HCT116 (cell line): ENCODE measurements at regions of chr4 and their contacts with region 1.

Region 1: GRCh38 chr4:74133786-74134499 is 24.0 kb upstream of the MTHFD2L start:
- DNase-seq: peak; percentile 86
- ATAC-seq: peak; percentile 99
- H3K4me3 ChIP-seq: no peak overlapping the region
- H3K27ac ChIP-seq: no peak overlapping the region
- H3K4me1 ChIP-seq: peaks cover 0 to 6% of the 10 kb centered on the region in 2 experiments; a peak in 2 of 4 replicates
- H3K27me3 ChIP-seq: no peaks in the 10 kb centered on the region
- CTCF ChIP-seq: peak; percentile 84 to 89 (median 85)
- POLR2A ChIP-seq: no peak
- RAD21 ChIP-seq: peak; percentile 97

Region 2: GRCh38 chr4:73341454-73341853 is 792.5 kb before region 1 on chr4:
- CTCF ChIA-PET with region 1: interaction called, 13 read pairs
- POLR2A ChIA-PET with region 1: no interaction called
- RAD21 ChIA-PET with region 1: interaction called in 1 of 2 experiments, 3 read pairs
- intact Hi-C with region 1: no loop called
- DNase-seq: peak; percentile 33
- ATAC-seq: peak; percentile 85
- H3K4me3 ChIP-seq: no peak overlapping the region
- H3K27ac ChIP-seq: no peak overlapping the region
- H3K4me1 ChIP-seq: no peaks in the 10 kb centered on the region
- H3K27me3 ChIP-seq: no peaks in the 10 kb centered on the region
- CTCF ChIP-seq: peak; percentile 52 to 82 (median 65)
- POLR2A ChIP-seq: no peak
- RAD21 ChIP-seq: peak; percentile 84

Region 3: DNA sequence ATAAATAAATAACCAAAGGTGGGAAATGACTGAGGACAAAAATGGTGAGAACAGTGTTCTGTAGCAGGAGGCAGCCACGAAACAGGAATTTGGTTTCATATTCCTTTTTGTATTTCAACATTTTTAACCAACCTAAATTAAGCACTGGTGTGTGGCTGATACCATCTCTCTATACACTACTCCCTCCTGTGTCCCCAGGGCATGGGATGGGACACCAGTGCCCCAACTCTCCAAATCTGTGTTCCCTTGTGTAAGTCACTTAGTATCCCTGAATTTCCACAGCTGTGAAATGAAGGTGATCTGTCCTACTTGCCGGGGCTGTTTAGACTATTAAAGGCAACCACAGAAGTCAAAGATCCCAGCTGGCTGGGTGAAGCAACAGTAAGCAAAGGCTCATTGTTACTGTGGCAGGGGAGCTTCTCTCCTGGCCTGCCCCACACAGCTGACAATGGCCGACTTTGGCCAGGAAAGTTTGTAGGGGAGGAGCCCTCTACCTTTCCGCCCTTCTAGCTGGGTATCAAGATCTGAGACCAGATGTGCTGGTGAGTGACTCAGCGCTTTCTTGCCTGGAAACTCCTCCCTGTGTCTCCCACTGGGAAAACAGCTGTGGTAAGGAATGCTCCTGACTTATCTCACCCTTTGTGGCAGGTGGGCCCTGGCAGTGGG is 534.9 kb before region 1 on chr4:
- CTCF ChIA-PET with region 1: interaction called, 16 read pairs
- POLR2A ChIA-PET with region 1: no interaction called
- RAD21 ChIA-PET with region 1: no interaction called
- intact Hi-C with region 1: loop called (anchors 5 kb)
- DNase-seq: peak; percentile 38
- ATAC-seq: peak; percentile 96
- H3K4me3 ChIP-seq: peak overlapping the region in 1 of 2 experiments; percentile 38; a peak in 1 of 4 replicates
- H3K27ac ChIP-seq: peak overlapping the region; percentile 3; the same call in 1 of the 2 replicates
- H3K4me1 ChIP-seq: peaks cover 18 to 30% of the 10 kb centered on the region in 2 experiments; a peak in 3 of 4 replicates
- H3K27me3 ChIP-seq: no peaks in the 10 kb centered on the region
- CTCF ChIP-seq: no peak
- POLR2A ChIP-seq: no peak
- RAD21 ChIP-seq: no peak

Region 4: DNA sequence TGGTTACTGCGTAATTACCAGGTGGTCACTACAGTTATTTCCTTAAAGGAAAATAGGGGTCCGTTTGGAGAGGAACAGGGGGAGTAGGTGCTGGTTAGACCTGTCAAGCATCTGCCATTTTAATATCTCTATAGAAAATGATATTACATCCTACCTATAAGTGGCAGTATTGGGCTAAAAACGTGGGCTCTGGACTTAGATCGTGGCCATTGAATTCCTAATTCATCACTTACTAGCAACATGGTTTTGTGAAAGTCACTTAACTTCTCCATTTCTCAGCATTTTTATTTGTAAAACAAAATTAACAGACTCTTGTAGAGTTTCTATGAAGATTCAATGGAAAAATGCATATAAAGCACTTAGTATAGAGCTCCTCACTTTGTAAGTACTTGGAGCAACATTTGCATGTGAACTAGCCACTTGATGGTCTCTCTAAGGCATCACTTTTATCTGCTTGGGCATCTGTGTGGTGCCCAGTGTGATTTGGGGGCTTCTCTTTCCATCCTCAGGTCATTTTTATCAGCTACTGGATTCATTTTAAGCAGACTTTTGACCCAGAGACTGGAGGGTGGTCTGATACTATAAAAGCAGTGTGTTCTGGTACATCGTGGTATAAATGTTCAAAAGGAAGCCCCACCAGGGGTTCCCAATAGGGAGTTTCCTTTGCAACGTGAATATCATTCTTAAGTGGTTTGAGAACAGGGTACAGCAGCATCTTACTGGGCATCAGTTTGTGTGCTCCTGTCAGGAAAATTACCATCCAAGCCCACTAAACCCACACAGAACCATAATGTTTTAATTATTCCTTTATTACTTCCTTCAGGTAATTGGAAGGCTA is 471.0 kb before region 1 on chr4:
- CTCF ChIA-PET with region 1: interaction called, 24 read pairs
- POLR2A ChIA-PET with region 1: no interaction called
- RAD21 ChIA-PET with region 1: interaction called, 3 read pairs
- intact Hi-C with region 1: loop called (anchors 1 kb)
- DNase-seq: peak; percentile 21
- ATAC-seq: peak; percentile 90
- H3K4me3 ChIP-seq: no peak overlapping the region
- H3K27ac ChIP-seq: no peak overlapping the region
- H3K4me1 ChIP-seq: no peaks in the 10 kb centered on the region
- H3K27me3 ChIP-seq: no peaks in the 10 kb centered on the region
- CTCF ChIP-seq: peak; percentile 40 to 57 (median 55); a peak in 4 of 6 replicates
- POLR2A ChIP-seq: no peak
- RAD21 ChIP-seq: peak; percentile 81

Region 5: DNA sequence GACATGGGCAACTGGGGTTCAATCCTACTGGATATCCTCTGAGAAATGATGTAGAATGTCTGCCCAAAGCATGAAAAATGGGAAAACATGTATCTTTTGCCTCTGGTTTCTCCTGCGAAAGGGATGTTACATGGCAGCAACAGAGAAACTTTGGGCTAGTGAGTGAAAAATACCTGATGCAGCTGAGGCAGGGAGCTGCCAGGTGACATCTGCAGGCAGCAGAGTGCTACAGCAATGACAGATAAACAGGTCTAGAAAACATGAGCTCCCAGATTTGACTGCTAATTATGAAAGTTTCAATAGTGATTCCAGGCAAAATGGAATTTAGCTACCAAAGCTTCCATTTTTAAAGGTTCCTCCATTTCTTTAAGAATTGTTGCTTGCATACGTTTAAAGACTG is 269.6 kb before region 1 on chr4:
- CTCF ChIA-PET with region 1: interaction called, 13 read pairs
- POLR2A ChIA-PET with region 1: interaction called, 4 read pairs
- RAD21 ChIA-PET with region 1: interaction called in 1 of 2 experiments, 4 read pairs
- intact Hi-C with region 1: loop called (anchors 2 kb)
- DNase-seq: no peak
- ATAC-seq: peak; percentile 37
- H3K4me3 ChIP-seq: no peak overlapping the region
- H3K27ac ChIP-seq: no peak overlapping the region
- H3K4me1 ChIP-seq: peaks cover 0 to 10% of the 10 kb centered on the region in 2 experiments; a peak in 2 of 4 replicates
- H3K27me3 ChIP-seq: no peaks in the 10 kb centered on the region
- CTCF ChIP-seq: peak; percentile 47 to 71 (median 70); a peak in 5 of 6 replicates
- POLR2A ChIP-seq: no peak
- RAD21 ChIP-seq: peak; percentile 66

Region 6: DNA sequence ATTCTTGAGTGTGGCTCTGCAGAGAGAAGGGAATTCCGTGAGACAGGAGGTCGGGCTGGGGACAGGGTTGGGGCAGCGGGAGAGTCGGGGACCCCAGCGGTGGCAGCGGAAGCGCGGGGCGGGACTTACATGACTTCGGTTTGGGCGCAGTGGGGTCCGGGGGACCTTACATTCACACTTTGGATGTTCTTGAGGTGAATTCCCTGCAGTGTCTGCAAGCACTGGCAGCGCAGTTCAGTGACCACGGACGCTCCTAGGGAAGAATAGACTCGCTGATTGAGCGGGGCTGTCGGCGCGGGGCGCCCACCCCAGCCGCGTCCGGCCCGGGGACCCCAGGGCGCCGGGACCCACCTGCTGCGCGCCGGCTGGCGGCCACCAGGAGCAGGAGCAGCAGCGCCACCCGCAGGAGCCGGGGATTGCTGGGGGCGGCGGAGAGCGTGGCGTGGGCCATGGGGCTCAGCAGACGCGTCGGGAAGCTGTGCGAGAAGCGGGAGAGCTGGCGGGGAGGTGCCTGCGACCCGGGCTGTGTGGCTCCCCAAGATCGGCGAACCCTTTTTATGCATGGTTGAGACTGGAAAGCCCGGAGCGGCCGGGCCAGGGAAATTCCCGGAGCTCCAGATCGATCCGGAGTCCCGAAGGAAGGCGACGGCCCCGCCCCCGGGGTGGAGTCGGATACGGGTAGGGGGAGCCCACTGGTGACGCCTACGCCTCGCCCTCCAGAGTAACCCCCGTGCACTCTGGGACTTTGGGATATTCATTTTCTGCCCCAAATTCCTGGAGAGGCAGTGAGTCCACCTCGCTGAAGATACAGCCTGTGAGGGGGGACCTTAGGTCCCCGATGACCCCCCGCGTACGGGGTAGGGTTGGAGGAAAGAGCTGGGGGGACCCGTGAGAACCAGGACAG is 95.5 kb before region 1 on chr4 and contains the start of gene CXCL3:
- CTCF ChIA-PET with region 1: interaction called, 11 read pairs
- POLR2A ChIA-PET with region 1: no interaction called
- RAD21 ChIA-PET with region 1: no interaction called
- intact Hi-C with region 1: loop called (anchors 2 kb)
- DNase-seq: no peak
- ATAC-seq: peak; percentile 91
- H3K4me3 ChIP-seq: peak within 1 kb of the TSS; percentile 73 to 78
- H3K27ac ChIP-seq: peak within 1 kb of the TSS; percentile 44; the same call in 1 of the 2 replicates
- H3K4me1 ChIP-seq: peaks cover 0 to 12% of the 10 kb centered on the region in 2 experiments; a peak in 2 of 4 replicates
- H3K27me3 ChIP-seq: no peaks in the 10 kb centered on the region
- CTCF ChIP-seq: peak in 2 of 3 experiments; percentile 4 to 54; a peak in 2 of 6 replicates
- POLR2A ChIP-seq: no peak
- RAD21 ChIP-seq: no peak
- total RNA-seq, gene CXCL3: 1.9 TPM

Region 7: GRCh38 chr4:74174421-74174820 is 40.5 kb after region 1 on chr4:
- CTCF ChIA-PET with region 1: no interaction called
- POLR2A ChIA-PET with region 1: no interaction called
- RAD21 ChIA-PET with region 1: no interaction called
- intact Hi-C with region 1: no loop called
- DNase-seq: no peak
- ATAC-seq: no peak
- H3K4me3 ChIP-seq: no peak overlapping the region
- H3K27ac ChIP-seq: no peak overlapping the region
- H3K4me1 ChIP-seq: no peaks in the 10 kb centered on the region
- H3K27me3 ChIP-seq: no peaks in the 10 kb centered on the region
- CTCF ChIP-seq: no peak
- POLR2A ChIP-seq: no peak
- RAD21 ChIP-seq: no peak

Region 8: GRCh38 chr4:75376543-75376942 is 1242.6 kb after region 1 on chr4:
- CTCF ChIA-PET with region 1: no interaction called
- POLR2A ChIA-PET with region 1: no interaction called
- RAD21 ChIA-PET with region 1: no interaction called
- intact Hi-C with region 1: no loop called
- DNase-seq: no peak
- ATAC-seq: no peak
- H3K4me3 ChIP-seq: no peak overlapping the region
- H3K27ac ChIP-seq: no peak overlapping the region
- H3K4me1 ChIP-seq: no peaks in the 10 kb centered on the region
- H3K27me3 ChIP-seq: no peaks in the 10 kb centered on the region
- CTCF ChIP-seq: no peak
- POLR2A ChIP-seq: no peak
- RAD21 ChIP-seq: no peak